ENCODE measurements at regions of chr11 and their contacts with region 1.

Region 1: DNA sequence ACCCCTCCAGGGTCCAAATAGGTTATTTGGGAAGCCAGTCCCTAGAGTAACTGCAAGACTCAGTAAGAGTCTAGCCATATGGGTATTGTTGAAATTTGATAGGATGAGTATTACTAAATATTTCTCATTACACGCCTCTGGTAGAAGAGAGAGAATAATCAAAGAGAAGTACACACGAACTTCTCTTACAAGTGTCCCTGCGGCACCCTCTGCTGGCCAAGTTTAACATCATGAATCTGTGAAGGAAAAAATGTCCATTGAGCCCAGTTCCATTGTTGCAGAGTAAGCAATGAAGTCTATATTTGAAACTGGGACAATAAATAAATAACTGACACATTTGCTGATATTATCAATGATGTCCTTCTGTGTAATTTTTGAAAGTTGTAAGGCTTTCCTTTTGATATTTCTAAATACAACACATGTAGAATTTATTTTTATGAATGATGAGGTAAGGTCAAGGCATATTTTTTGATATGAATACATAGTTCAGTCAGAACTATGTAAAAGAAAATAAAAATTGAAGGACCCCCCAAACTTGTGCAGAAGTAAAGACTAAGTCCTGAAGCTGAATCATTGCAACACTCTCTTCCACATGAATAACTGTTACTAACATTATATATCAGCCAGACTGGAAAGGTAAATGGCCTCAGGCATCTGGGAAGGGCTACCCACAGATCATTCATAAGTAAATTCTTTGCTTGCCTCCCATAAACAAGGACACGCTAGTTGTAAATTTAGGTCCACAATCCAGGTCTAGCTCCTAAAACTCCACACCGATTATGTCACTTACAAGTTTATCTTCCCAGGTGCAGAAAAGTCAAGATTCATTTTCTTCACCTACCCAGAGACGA is 10.0 kb downstream of the OR51L1 start:
- DNase-seq: peak; percentile 60
- ATAC-seq: no peak

Region 2: GRCh38 chr11:4181782-4182721 is 822.6 kb before region 1 on chr11:
- intact Hi-C with region 1: loop called in 1 of 2 experiments (anchors 5 kb)
- DNase-seq: peak; percentile 56
- ATAC-seq: peak; percentile 66 to 75

Region 3: DNA sequence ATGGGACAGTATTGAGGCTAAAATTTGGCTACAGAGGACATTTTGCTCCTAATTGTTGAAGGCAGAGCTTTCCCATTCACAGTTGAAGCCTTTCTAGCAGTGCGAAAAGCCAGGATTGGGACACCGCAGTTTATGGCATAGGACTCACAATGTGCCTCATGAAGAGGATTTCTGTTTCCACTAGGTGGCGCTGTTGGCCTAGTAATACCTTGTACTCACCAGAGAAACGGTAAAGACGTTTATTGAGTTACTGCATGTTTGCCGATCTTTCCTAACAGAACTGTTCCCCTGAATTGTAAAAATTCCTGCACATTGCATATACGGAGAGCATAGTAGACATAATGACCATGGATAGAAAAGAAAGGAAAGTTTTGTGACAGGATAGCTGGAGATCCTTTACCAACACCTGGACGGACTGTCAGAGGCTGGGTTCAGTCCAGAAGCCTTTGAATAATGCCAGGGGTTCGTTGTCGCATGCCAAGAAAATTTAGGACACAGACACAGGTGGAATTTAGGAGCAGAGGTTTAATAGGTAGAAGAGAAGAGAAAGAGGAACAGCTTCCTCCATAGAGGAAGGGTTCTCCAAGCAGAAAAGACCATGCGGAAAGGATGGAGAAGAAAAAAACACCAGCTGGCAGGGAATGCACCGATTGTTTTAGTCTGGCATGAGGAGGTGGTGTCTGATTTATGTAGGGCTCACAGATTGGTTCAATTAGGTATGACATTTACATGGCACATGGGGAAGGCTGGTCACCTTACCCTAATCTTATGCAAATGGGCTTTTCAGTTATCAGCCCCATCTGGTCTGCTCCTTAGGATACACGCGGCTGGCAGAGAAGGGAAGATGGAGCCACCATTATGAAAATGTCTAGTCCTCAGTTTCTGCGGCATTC is 378.2 kb before region 1 on chr11:
- intact Hi-C with region 1: loop called in 1 of 2 experiments (anchors 2 kb)
- DNase-seq: peak; percentile 39
- ATAC-seq: peak; percentile 52 to 61

Region 4: GRCh38 chr11:4636962-4637661 is 367.5 kb before region 1 on chr11 and contains the start of gene OR51D1:
- intact Hi-C with region 1: loop called in 1 of 2 experiments (anchors 5 kb)
- DNase-seq: peak; percentile 66
- ATAC-seq: peak; percentile 95 to 96
- total RNA-seq, gene OR51D1: not detected